ENCODE measurements at regions of chr6 and their contacts with region 1.

Region 1: DNA sequence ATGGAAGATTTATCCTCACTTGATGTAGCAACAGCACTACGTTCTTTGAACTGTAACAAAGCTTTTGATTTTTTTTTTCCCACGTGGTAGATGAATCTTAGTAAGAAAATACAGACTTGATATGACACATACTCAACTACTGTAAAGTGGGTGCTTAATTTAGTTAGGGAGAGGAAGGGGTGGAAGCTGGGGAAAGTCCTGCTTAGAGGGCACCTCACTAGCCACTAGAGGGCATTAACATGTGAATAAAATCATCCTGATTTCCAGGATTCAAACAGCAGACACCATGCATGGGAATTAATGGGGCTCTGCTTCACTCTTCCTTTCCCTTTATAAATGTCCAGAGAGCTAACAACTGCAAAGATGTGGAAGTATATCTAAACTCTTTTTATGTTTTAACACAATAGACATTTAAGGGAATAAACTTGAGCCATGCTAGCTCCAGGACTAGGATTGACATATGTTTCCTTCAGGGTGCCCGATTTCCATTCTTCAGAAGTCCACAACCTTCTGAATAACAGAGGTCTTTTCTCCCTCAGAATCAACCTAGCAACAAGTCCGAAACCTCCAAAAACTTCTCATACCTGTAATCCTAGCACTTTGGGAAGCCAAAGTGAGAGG is 250.1 kb downstream of the ATXN1 start:
- DNase-seq: peak; percentile 38
- H3K4me3 ChIP-seq: no peak overlapping the region
- H3K27ac ChIP-seq: no peak overlapping the region
- H3K4me1 ChIP-seq: peaks cover 2 to 3% of the 10 kb centered on the region in 2 experiments; a peak in 2 of 4 replicates
- H3K27me3 ChIP-seq: no peaks in the 10 kb centered on the region
- CTCF ChIP-seq: peak; percentile 75
- EP300 ChIP-seq: no peak
- RAD21 ChIP-seq: peak; percentile 54

Region 2: DNA sequence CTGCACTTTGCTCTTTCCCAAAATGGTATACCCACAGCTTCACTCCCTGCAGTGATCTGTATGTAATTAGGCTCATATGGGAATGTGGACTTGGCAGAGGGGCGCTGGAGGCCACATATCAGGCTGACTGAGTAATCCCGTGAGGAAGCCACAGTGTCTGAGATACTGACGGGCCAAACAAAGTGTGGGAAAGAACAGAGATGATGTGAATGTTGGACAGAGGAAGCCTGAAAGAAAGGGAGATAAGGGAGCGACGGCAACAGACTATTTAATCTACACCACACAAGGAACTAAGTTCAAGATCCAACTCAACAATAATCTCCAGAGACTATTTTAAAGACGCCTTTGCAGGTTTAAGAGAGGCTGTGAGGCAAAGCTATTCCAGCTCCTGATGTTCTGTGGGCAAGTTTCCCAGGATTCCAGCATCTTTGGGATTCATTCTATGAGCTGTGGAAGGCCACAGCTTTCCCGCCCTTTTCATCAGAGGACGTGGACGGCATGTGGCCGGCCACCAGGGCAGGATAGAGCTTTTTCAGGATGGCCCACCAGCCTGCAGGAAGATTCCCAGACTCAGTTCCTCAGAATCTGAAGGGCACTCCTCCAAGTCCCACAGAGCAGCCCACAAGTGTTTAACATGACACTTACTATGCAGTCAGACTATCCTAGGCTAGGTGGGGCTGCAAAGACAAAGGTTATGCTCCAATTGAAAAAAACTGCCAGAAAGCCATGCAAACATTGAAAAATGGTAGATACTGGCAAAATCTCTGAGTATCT is 12.6 kb after region 1 on chr6:
- CTCF ChIA-PET with region 1: interaction called, 17 read pairs
- POLR2A ChIA-PET with region 1: no interaction called
- DNase-seq: no peak
- H3K4me3 ChIP-seq: no peak overlapping the region
- H3K27ac ChIP-seq: peak overlapping the region; percentile 8 to 98; a peak in 3 of 4 replicates
- H3K4me1 ChIP-seq: peaks cover 4 to 8% of the 10 kb centered on the region in 2 experiments; a peak in 2 of 4 replicates
- H3K27me3 ChIP-seq: no peaks in the 10 kb centered on the region
- CTCF ChIP-seq: no peak
- EP300 ChIP-seq: peak in 1 of 2 experiments; percentile 65; a peak in 1 of 4 replicates
- RAD21 ChIP-seq: no peak

Region 3: DNA sequence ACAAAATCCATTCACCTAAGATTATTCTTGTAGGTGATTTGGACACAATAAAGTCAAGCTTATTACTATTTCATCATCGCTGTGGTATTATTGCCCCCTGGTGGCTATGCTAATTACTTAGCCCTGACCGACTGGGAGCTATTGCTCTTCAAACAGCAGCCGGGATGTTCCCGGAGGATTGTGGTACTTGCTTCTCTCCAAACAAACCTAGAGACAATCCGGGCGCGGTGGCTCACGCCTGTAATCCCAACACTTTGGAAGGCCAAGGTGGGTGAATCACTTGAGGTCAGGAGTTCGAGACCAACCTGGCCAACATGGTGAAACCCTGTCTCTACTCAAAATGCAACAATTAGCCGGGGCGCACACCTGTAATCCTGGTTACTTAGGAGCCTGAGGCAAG is 575.3 kb after region 1 on chr6:
- CTCF ChIA-PET with region 1: interaction called, 11 read pairs
- POLR2A ChIA-PET with region 1: no interaction called
- DNase-seq: peak; percentile 66
- H3K4me3 ChIP-seq: no peak overlapping the region; a peak in 1 of 4 replicates
- H3K27ac ChIP-seq: peak overlapping the region in 1 of 2 experiments; percentile 45; a peak in 1 of 4 replicates
- H3K4me1 ChIP-seq: peaks cover 0 to 9% of the 10 kb centered on the region in 2 experiments; a peak in 1 of 4 replicates
- H3K27me3 ChIP-seq: no peaks in the 10 kb centered on the region
- CTCF ChIP-seq: peak; percentile 83
- EP300 ChIP-seq: no peak
- RAD21 ChIP-seq: peak; percentile 81